CD4-positive, alpha-beta memory T cell (primary cell): ENCODE measurements at regions of chr9 and their contacts with region 1.

Region 1: DNA sequence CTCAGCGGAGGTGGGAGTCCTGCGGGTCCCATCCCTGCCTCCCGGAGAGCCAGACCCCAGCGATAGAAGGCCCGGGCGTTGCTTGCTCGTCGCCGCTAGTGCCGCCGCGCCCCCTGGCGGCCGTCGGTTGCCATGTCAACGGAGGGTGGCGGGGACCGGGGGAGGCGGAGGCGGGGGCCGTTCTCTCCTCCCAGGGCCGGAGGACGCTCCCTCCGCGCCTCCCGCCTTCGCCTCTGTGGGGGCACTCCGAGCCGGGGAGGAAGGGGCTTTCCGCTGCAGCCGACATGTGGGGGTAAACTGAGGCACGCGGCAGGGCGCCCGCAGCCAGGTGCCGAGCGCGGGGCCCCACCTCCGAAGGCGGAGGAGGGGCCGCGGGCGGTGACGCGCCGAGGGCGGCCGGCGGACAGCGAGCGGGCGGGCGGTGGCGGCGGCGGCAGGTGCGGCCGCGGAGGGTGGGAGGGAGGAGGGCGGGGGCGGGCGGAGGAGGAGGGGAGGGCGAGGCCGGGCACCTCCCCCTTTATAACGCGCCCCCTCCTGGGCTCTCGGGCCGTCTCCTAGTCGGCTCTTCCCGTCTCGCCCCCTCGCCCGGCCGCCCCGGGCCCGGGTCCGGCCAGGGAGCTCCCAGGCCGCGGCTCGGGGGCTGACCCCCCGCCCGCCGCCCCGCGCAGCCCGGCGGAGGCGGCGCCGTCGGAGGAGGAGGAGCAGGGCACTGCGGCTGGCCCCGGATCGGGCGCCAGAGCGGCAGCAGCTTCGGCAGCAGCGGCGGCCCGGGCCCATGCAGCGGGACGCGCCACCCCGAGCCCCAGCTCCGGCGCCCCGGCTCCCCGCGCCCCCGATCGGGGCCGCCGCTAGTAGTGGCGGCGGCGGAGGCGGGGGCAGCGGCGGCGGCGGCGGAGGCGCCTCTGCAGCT is 556 bp upstream of the CDK9 start:
- DNase-seq: peak; percentile 89 to 93 (median 90)
- H3K4me3 ChIP-seq: peak overlapping the region in 1 of 2 donors; percentile 61
- H3K4me3 Mint-ChIP-seq: peak overlapping the region; percentile 80 to 93 (median 86)
- H3K27ac ChIP-seq: peak overlapping the region; percentile 86
- H3K27ac Mint-ChIP-seq: peak overlapping the region; percentile 93 to 99 (median 97)
- H3K4me1 ChIP-seq: peaks cover 68% of the 10 kb centered on the region
- H3K4me1 Mint-ChIP-seq: peaks cover 34 to 74% (median 49%) of the 10 kb centered on the region in 4 donors
- H3K27me3 ChIP-seq: no peaks in the 10 kb centered on the region
- H3K27me3 Mint-ChIP-seq: no peaks in the 10 kb centered on the region

Region 2: GRCh38 chr9:126939821-126940221 is 845.5 kb before region 1 on chr9:
- CTCF ChIA-PET with region 1: no interaction called
- POLR2A ChIA-PET with region 1: no interaction called
- intact Hi-C with region 1: no loop called
- DNase-seq: no peak
- H3K4me3 ChIP-seq: no peak overlapping the region
- H3K4me3 Mint-ChIP-seq: no peak overlapping the region
- H3K27ac ChIP-seq: no peak overlapping the region
- H3K27ac Mint-ChIP-seq: no peak overlapping the region
- H3K4me1 ChIP-seq: peaks cover 4% of the 10 kb centered on the region
- H3K4me1 Mint-ChIP-seq: peaks cover 4 to 11% (median 5%) of the 10 kb centered on the region in 4 donors
- H3K27me3 ChIP-seq: no peaks in the 10 kb centered on the region
- H3K27me3 Mint-ChIP-seq: no peaks in the 10 kb centered on the region

Region 3: DNA sequence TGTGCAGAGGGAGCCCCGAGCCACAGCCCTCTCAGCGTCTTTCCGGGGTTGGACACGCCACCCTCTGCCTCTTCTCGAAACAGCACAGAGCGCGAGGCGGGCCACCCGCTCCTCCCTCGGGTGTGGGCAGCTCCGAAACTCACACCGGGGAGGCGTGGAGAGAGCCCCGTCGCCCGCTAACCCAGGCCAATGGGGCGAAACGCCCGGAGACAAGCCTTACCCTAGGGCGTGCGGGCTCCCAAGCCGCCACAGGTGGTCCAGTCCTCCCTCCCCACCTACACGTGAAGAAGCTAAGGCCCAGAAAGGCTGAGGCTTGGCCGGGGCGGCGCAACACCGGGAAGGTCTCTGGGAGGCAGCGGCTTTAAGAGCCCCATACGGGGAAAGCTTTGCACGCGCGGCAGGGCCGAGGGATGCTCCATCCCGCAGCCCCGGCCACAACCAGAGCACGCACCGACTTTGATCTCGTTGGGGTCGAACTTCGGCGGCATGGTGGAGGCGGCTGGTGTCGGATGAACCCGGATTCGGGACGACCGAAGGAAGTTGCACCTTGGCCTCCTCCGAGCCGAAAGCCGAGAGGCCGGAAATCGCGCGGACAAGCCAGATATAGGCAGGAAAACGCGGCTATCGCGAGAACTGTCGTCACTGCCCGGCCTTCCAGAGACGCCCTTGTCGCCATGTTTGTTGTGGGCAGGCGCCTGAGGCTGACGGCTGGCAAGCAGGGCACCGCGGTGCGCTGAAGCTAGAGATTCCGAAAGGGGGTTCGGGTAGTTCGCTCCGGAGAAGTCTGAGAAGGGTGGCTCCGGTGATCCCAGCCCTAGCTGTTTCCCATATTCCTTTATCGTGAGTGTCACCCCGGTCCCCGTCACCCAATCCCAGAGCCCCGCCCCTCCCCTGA is 334.2 kb before region 1 on chr9 and contains the starts of genes LRSAM1 and RPL12:
- CTCF ChIA-PET with region 1: no interaction called
- POLR2A ChIA-PET with region 1: interaction called, 5 read pairs
- intact Hi-C with region 1: loop called (anchors 2 kb)
- DNase-seq: peak; percentile 96 to 99 (median 97)
- H3K4me3 ChIP-seq: peak within 1 kb of the TSS; percentile 86 to 97
- H3K4me3 Mint-ChIP-seq: peak within 1 kb of the TSS; percentile 95 to 99 (median 96)
- H3K27ac ChIP-seq: peak within 1 kb of the TSS; percentile 83
- H3K27ac Mint-ChIP-seq: peak within 1 kb of the TSS; percentile 95 to 98 (median 96)
- H3K4me1 ChIP-seq: peaks cover 29% of the 10 kb centered on the region
- H3K4me1 Mint-ChIP-seq: peaks cover 27 to 62% (median 36%) of the 10 kb centered on the region in 4 donors
- H3K27me3 ChIP-seq: no peaks in the 10 kb centered on the region
- H3K27me3 Mint-ChIP-seq: no peaks in the 10 kb centered on the region
- total RNA-seq, gene LRSAM1: 30.5 to 31.3 TPM
- total RNA-seq, gene RPL12: 1,622 to 1,664 TPM

Region 4: GRCh38 chr9:127715394-127716337 is 69.6 kb before region 1 on chr9 and contains the starts of genes PTRH1 and TTC16:
- CTCF ChIA-PET with region 1: interaction called, 5 read pairs
- POLR2A ChIA-PET with region 1: interaction called, 12 read pairs
- intact Hi-C with region 1: no loop called
- DNase-seq: peak; percentile 95 to 97 (median 96)
- H3K4me3 ChIP-seq: peak within 1 kb of the TSS; percentile 45 to 91
- H3K4me3 Mint-ChIP-seq: peak within 1 kb of the TSS; percentile 95 to 100 (median 99)
- H3K27ac ChIP-seq: peak within 1 kb of the TSS; percentile 71
- H3K27ac Mint-ChIP-seq: peak within 1 kb of the TSS; percentile 83 to 99 (median 98)
- H3K4me1 ChIP-seq: peaks cover 45% of the 10 kb centered on the region
- H3K4me1 Mint-ChIP-seq: peaks cover 26 to 41% (median 34%) of the 10 kb centered on the region in 4 donors
- H3K27me3 ChIP-seq: no peaks in the 10 kb centered on the region
- H3K27me3 Mint-ChIP-seq: no peaks in the 10 kb centered on the region
- total RNA-seq, gene PTRH1: 7.3 to 8.4 TPM
- total RNA-seq, gene TTC16: 2.5 to 2.6 TPM

Region 5: GRCh38 chr9:127796225-127796813 is 11.0 kb after region 1 on chr9:
- CTCF ChIA-PET with region 1: interaction called, 10 read pairs
- POLR2A ChIA-PET with region 1: interaction called, 54 read pairs
- intact Hi-C with region 1: no loop called
- DNase-seq: no peak
- H3K4me3 ChIP-seq: no peak overlapping the region
- H3K4me3 Mint-ChIP-seq: peak overlapping the region in 6 of 8 donors; percentile 62 to 89 (median 74)
- H3K27ac ChIP-seq: no peak overlapping the region
- H3K27ac Mint-ChIP-seq: peak overlapping the region; percentile 58 to 93 (median 87)
- H3K4me1 ChIP-seq: peaks cover 23% of the 10 kb centered on the region
- H3K4me1 Mint-ChIP-seq: peaks cover 12 to 32% (median 23%) of the 10 kb centered on the region in 4 donors
- H3K27me3 ChIP-seq: no peaks in the 10 kb centered on the region
- H3K27me3 Mint-ChIP-seq: no peaks in the 10 kb centered on the region

Region 6: DNA sequence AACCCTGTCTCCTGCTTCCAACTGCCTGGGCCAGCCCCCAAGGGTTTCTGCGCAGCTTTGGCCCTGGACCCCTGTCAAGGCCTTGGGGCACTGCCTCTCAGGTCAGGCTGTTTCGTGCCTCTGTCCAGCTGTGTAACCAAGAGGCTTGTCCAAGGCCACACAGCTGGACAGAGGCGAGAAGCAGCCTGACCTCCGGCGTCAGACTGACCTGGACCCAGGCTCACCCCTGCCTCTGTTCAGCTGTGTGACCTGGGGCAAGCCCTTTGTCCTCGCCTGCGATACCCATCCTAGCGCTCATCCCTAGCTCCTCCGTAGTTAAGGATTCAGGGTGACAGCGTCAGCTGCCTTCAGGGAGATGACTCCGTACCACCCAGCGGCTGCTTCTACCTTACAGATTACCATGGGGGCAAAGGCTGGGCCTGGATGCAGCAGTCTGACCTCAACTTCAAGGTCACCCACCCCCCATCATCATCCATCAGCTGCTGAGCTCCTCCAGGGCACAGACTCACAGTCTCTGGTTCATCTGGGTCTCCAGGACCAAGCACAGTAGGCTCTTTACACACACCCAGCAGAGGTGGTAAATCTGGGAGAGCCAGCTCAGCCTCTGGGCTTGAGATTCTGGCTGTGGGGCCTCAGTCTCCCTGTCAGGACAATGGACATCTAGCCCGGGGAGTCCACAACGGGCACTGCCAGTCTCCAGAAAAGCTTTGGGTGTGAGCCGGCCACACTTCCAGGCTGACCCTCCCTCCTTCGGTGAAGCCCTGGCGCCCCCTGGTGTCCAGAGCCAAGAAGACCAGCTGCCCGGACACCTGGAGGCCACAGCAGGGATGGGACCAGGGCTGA is 84.3 kb after region 1 on chr9:
- CTCF ChIA-PET with region 1: interaction called, 45 read pairs
- POLR2A ChIA-PET with region 1: interaction called, 27 read pairs
- intact Hi-C with region 1: loop called (anchors 2 kb)
- DNase-seq: peak; percentile 61 to 76 (median 63)
- H3K4me3 ChIP-seq: no peak overlapping the region
- H3K4me3 Mint-ChIP-seq: no peak overlapping the region
- H3K27ac ChIP-seq: no peak overlapping the region
- H3K27ac Mint-ChIP-seq: peak overlapping the region in 2 of 7 donors; percentile 31 to 53
- H3K4me1 ChIP-seq: peaks cover 20% of the 10 kb centered on the region
- H3K4me1 Mint-ChIP-seq: peaks cover 13 to 20% (median 15%) of the 10 kb centered on the region in 4 donors
- H3K27me3 ChIP-seq: no peaks in the 10 kb centered on the region
- H3K27me3 Mint-ChIP-seq: no peaks in the 10 kb centered on the region

Region 7: GRCh38 chr9:127884427-127884911 is 99.2 kb after region 1 on chr9:
- CTCF ChIA-PET with region 1: no interaction called
- POLR2A ChIA-PET with region 1: no interaction called
- intact Hi-C with region 1: no loop called
- DNase-seq: no peak
- H3K4me3 ChIP-seq: no peak overlapping the region
- H3K4me3 Mint-ChIP-seq: no peak overlapping the region
- H3K27ac ChIP-seq: no peak overlapping the region
- H3K27ac Mint-ChIP-seq: peak overlapping the region in 4 of 7 donors; percentile 19 to 72 (median 51)
- H3K4me1 ChIP-seq: no peaks in the 10 kb centered on the region
- H3K4me1 Mint-ChIP-seq: peaks cover 0 to 13% (median 9%) of the 10 kb centered on the region in 4 donors
- H3K27me3 ChIP-seq: no peaks in the 10 kb centered on the region
- H3K27me3 Mint-ChIP-seq: no peaks in the 10 kb centered on the region

Region 8: DNA sequence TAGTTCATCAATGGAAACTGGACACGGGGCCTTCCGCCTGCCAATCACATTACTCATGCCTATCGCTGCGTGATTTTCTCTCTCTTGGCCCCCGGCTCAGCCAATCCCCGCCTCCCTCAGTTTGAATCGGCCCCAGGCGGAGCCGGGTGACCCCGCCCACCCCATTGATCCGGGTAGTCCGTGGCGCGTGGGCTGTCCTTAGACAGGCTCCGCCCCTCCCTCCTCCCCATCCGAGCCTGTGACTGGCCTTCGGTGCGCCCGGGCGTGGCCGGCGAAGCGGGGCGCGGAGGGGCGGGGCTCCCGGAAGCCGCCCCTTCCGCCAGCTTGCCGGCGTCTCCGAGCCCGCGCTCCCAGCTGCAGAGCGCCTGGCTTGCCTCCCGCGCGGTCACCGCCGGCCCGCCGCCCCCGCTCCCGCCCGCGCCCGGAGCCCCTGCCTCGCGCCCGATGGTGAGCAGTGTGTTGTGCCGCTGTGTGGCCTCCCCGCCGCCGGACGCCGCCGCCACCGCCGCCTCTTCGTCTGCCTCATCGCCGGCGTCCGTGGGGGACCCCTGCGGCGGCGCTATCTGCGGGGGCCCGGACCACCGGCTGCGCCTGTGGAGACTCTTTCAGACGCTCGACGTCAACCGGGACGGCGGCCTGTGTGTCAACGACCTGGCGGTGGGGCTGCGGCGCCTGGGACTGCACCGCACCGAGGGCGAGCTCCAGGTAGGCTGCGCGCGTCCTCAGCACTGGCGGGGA is 282.8 kb after region 1 on chr9 and contains the start of gene SLC25A25:
- CTCF ChIA-PET with region 1: no interaction called
- POLR2A ChIA-PET with region 1: interaction called, 14 read pairs
- intact Hi-C with region 1: loop called (anchors 5 kb)
- DNase-seq: peak; percentile 100
- H3K4me3 ChIP-seq: peak within 1 kb of the TSS; percentile 87 to 92
- H3K4me3 Mint-ChIP-seq: peak within 1 kb of the TSS in 7 of 8 donors; percentile 89 to 98 (median 94)
- H3K27ac ChIP-seq: peak within 1 kb of the TSS; percentile 86
- H3K27ac Mint-ChIP-seq: peak within 1 kb of the TSS; percentile 83 to 97 (median 91)
- H3K4me1 ChIP-seq: peaks cover 80% of the 10 kb centered on the region
- H3K4me1 Mint-ChIP-seq: peaks cover 36 to 56% (median 45%) of the 10 kb centered on the region in 4 donors
- H3K27me3 ChIP-seq: no peaks in the 10 kb centered on the region
- H3K27me3 Mint-ChIP-seq: no peaks in the 10 kb centered on the region
- total RNA-seq, gene SLC25A25: 22.0 to 26.9 TPM